ENCODE measurements at regions of chr10 and their contacts with region 1.

Region 1: DNA sequence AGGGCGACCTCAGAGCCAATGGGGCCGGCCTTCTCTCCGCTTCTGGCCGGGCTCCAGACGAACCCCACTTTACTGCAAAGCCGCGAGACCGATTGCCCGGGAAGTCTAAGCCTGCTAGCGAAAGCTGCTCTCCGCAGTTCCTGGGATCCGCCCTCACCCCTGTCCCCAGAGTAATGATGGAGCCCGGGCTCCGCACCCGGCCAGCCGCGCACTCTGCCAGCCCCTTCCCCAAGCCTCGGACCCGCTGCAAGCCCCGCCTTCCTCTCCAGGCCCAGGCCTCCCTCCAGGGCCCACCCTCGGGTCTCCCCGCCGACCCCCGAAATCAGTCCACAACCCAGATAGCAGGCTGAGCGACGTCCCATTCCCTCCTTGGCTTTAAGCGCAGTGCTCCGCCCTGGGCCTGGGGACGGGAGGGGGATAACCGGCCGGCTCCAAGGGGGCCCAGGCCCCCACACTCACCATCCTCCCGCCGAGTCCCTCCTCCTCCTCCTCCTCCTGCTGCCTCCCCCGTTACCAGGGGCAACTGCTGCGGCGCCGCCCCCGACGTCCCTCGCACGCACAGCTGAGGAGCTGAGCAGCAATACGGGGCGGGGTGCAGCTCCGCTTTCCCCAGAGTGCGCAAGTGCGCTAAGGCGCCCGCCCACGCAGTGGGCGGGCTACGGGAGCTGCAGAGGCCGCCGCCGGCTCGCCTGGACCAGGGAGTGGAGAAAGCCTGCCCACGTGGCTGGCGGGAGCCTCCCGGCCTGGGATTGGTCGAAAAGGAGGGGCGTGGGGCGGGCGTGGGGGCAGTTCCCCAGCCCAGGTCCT is at the start of gene ARL3:
- DNase-seq: peak; percentile 96 to 99
- H3K4me3 ChIP-seq: peak within 1 kb of the TSS; percentile 90
- CTCF ChIP-seq: no peak
- POLR2A ChIP-seq: no peak
- total RNA-seq, gene ARL3: 1.6 to 3.8 (median 3.2) TPM

Region 2: GRCh38 chr10:102645741-102646609 is 68.0 kb before region 1 on chr10:
- intact Hi-C with region 1: loop called (anchors 2 kb)
- DNase-seq: peak; percentile 93 to 98
- H3K4me3 ChIP-seq: peak overlapping the region; percentile 84
- CTCF ChIP-seq: no peak
- POLR2A ChIP-seq: peak in 1 of 2 donors; percentile 50

Measured in lower leg skin (tissue), 4 donors.